Activated CD4-positive, alpha-beta memory T cell treated with anti-CD3 and anti-CD28 coated beads for 36 hours (primary cell): ENCODE measurements at regions of chr1 and their contacts with region 1.

Region 1: GRCh38 chr1:1777950-1778662 is at the start of gene NADK:
- DNase-seq: peak; percentile 74
- H3K4me3 Mint-ChIP-seq: peak within 1 kb of the TSS; percentile 82
- H3K27ac Mint-ChIP-seq: peak within 1 kb of the TSS; percentile 83
- H3K4me1 Mint-ChIP-seq: peaks cover 62% of the 10 kb centered on the region
- H3K27me3 Mint-ChIP-seq: no peaks in the 10 kb centered on the region
- total RNA-seq, gene NADK: 56.2 to 57.4 TPM

Region 2: GRCh38 chr1:1806890-1807289 is 28.8 kb after region 1 on chr1:
- CTCF ChIA-PET with region 1: no interaction called
- POLR2A ChIA-PET with region 1: no interaction called
- intact Hi-C with region 1: no loop called
- DNase-seq: peak; percentile 41
- H3K4me3 Mint-ChIP-seq: no peak overlapping the region
- H3K27ac Mint-ChIP-seq: no peak overlapping the region
- H3K4me1 Mint-ChIP-seq: peaks cover 8% of the 10 kb centered on the region
- H3K27me3 Mint-ChIP-seq: no peaks in the 10 kb centered on the region

Region 3: GRCh38 chr1:1819762-1820161 is 41.7 kb after region 1 on chr1:
- CTCF ChIA-PET with region 1: no interaction called
- POLR2A ChIA-PET with region 1: no interaction called
- intact Hi-C with region 1: loop called (anchors 5 kb)
- DNase-seq: no peak
- H3K4me3 Mint-ChIP-seq: no peak overlapping the region
- H3K27ac Mint-ChIP-seq: no peak overlapping the region
- H3K4me1 Mint-ChIP-seq: peaks cover 19% of the 10 kb centered on the region
- H3K27me3 Mint-ChIP-seq: no peaks in the 10 kb centered on the region

Region 4: DNA sequence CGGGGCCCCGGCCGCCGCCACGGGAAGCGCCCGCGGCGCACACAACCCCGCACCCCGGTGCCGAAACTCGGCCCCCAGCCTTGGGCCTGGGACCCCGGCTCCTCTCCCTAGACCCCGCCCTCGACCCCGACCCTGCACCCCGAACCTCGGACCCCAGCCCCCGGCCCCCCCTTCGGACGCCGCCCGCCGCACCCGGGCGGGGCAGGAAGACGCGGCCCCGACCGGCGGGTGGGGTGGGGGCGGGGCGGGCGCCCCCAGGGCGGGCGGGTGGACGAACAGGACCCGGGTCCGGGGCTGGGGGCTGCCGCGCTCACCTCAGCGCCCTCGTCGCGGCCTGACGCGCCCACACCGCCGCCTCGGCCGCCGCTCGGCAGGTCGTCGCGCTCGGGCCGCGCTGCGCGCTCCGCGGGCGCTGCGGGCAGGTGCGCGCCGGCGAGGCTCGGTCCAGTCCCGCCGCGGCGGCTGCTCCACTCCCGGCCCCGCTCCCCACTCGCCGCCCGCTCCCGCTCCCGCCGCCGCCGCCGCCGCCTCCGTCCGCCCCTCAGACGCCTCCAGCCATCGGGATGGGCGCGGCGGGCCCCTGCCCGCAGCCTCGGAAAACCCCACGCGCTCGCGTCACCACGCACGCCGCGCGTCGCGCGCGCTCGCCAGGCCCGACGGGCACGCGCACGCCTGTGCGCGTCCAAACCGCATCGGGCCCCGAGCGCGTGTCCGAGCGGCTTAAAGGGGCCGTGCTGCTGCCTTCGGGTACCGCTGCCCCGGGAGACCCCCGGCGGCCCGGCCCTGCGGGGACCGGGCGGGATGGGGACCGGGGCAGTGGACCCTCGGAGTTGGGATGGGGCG is 112.6 kb after region 1 on chr1 and contains the start of gene GNB1:
- CTCF ChIA-PET with region 1: interaction called, 3 read pairs
- POLR2A ChIA-PET with region 1: no interaction called
- intact Hi-C with region 1: loop called (anchors 2 kb)
- DNase-seq: peak; percentile 90
- H3K4me3 Mint-ChIP-seq: peak within 1 kb of the TSS; percentile 81
- H3K27ac Mint-ChIP-seq: peak within 1 kb of the TSS; percentile 88
- H3K4me1 Mint-ChIP-seq: peaks cover 49% of the 10 kb centered on the region
- H3K27me3 Mint-ChIP-seq: no peaks in the 10 kb centered on the region
- total RNA-seq, gene GNB1: 396 to 403 TPM